H1 (cell line): ENCODE measurements at regions of chr1 and their contacts with region 1.

Region 1: GRCh38 chr1:31789259-31790065 is 25.3 kb upstream of the ADGRB2 start:
- DNase-seq: peak; percentile 60 to 100
- H3K4me3 ChIP-seq: peak overlapping the region; percentile 79 to 89 (median 88); a peak in 6 of 8 replicates
- H3K27ac ChIP-seq: no peak overlapping the region
- H3K4me1 ChIP-seq: peaks cover 3 to 8% (median 4%) of the 10 kb centered on the region in 4 experiments; a peak in 5 of 7 replicates
- H3K27me3 ChIP-seq: no peaks in the 10 kb centered on the region
- CTCF ChIP-seq: peak; percentile 95 to 98 (median 97)
- EP300 ChIP-seq: peak in 1 of 2 experiments; percentile 42; a peak in 1 of 3 replicates
- POLR2A ChIP-seq: no peak
- RAD21 ChIP-seq: peak; percentile 97 to 100

Region 2: GRCh38 chr1:31663622-31664452 is 125.6 kb before region 1 on chr1:
- CTCF ChIA-PET with region 1: interaction called, 80 read pairs
- POLR2A ChIA-PET with region 1: no interaction called
- DNase-seq: peak; percentile 25 to 98
- H3K4me3 ChIP-seq: no peak overlapping the region
- H3K27ac ChIP-seq: no peak overlapping the region
- H3K4me1 ChIP-seq: peaks cover 0 to 3% (median 0%) of the 10 kb centered on the region in 4 experiments; a peak in 3 of 7 replicates
- H3K27me3 ChIP-seq: no peaks in the 10 kb centered on the region
- CTCF ChIP-seq: peak in 2 of 3 experiments; percentile 93 to 96; a peak in 3 of 4 replicates
- EP300 ChIP-seq: no peak
- POLR2A ChIP-seq: no peak
- RAD21 ChIP-seq: peak; percentile 96 to 98

Region 3: GRCh38 chr1:31705080-31705866 is 84.2 kb before region 1 on chr1:
- CTCF ChIA-PET with region 1: interaction called, 27 read pairs
- POLR2A ChIA-PET with region 1: interaction called, 4 read pairs
- DNase-seq: peak in 1 of 2 experiments; percentile 80
- H3K4me3 ChIP-seq: peak overlapping the region in 3 of 4 experiments; percentile 15 to 69 (median 17); a peak in 5 of 8 replicates
- H3K27ac ChIP-seq: no peak overlapping the region; the same call in 1 of the 2 replicates
- H3K4me1 ChIP-seq: peaks cover 15 to 35% (median 16%) of the 10 kb centered on the region in 4 experiments
- H3K27me3 ChIP-seq: no peaks in the 10 kb centered on the region; a peak in 1 of 7 replicates
- CTCF ChIP-seq: peak in 2 of 3 experiments; percentile 6 to 24; a peak in 2 of 4 replicates
- EP300 ChIP-seq: no peak
- POLR2A ChIP-seq: no peak
- RAD21 ChIP-seq: peak; percentile 32 to 47; a peak in 3 of 4 replicates

Region 4: DNA sequence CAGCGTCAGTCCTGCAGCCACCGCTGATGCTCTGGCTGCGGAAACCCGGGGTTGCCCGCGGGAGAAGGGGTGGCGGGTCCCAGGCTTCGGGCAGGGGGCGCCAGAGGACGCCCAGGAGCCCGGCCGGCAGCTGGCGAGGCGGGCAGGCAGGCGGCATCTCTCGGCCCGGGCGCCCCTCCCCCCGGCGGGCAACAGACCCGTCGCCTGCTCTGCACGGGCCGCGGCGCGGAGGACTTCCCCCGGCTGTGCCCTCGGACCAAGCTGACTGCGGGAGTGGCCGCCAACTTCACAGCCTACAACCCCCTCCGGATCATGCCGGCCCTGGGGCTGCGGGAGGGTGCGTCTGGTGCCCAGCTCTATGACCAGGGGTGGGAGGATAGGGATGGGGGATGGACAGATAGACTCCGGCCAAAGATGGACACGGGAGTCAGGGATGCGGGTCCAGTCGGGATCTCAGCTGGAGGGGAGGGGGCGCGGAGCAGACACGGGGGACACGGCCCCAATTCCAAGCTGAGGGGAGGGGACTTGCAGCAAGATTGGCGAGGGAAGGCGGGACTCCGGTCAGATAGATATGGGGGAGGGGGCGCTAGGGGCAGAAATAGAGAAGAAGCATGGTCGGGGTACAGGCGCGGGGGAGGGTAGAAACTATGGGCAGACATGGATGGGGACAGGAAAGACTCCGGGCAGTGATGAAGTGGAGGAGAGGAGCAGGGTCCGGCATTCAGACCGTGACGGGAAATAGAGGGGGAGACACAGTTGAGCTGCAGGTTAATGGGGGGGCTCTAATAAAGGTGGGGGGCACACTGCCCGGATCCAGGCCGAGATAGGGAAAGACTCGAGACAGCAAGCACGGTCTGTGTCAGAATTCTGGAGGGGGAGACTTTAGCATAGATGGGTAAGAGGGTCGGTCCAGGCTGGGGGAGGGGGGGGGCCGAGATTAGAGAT is 26.5 kb before region 1 on chr1:
- CTCF ChIA-PET with region 1: interaction called, 206 read pairs
- POLR2A ChIA-PET with region 1: interaction called, 13 read pairs
- DNase-seq: peak in 1 of 2 experiments; percentile 94
- H3K4me3 ChIP-seq: peak overlapping the region; percentile 48 to 75 (median 62)
- H3K27ac ChIP-seq: no peak overlapping the region
- H3K4me1 ChIP-seq: peaks cover 24 to 55% (median 34%) of the 10 kb centered on the region in 4 experiments
- H3K27me3 ChIP-seq: peaks cover 3 to 16% (median 7%) of the 10 kb centered on the region in 4 experiments; a peak in 5 of 7 replicates
- CTCF ChIP-seq: peak in 2 of 3 experiments; percentile 72 to 90; a peak in 3 of 4 replicates
- EP300 ChIP-seq: peak in 1 of 2 experiments; percentile 77; a peak in 1 of 3 replicates
- POLR2A ChIP-seq: no peak
- RAD21 ChIP-seq: peak; percentile 55 to 81

Region 5: GRCh38 chr1:31805318-31805717 is 15.9 kb after region 1 on chr1:
- CTCF ChIA-PET with region 1: interaction called, 44 read pairs
- POLR2A ChIA-PET with region 1: no interaction called
- DNase-seq: no peak
- H3K4me3 ChIP-seq: no peak overlapping the region
- H3K27ac ChIP-seq: no peak overlapping the region
- H3K4me1 ChIP-seq: 0 out of 7 replicates have a peak, but pooled peaks cover 0 to 2% (median 0%) of the 10 kb centered on the region in 4 experiments
- H3K27me3 ChIP-seq: no peaks in the 10 kb centered on the region
- CTCF ChIP-seq: no peak
- EP300 ChIP-seq: no peak
- POLR2A ChIP-seq: no peak
- RAD21 ChIP-seq: no peak

Region 6: GRCh38 chr1:31910933-31911332 is 121.5 kb after region 1 on chr1:
- CTCF ChIA-PET with region 1: no interaction called
- POLR2A ChIA-PET with region 1: no interaction called
- DNase-seq: no peak
- H3K4me3 ChIP-seq: no peak overlapping the region
- H3K27ac ChIP-seq: no peak overlapping the region
- H3K4me1 ChIP-seq: no peaks in the 10 kb centered on the region
- H3K27me3 ChIP-seq: no peaks in the 10 kb centered on the region
- CTCF ChIP-seq: no peak
- EP300 ChIP-seq: no peak
- POLR2A ChIP-seq: no peak
- RAD21 ChIP-seq: no peak

Region 7: DNA sequence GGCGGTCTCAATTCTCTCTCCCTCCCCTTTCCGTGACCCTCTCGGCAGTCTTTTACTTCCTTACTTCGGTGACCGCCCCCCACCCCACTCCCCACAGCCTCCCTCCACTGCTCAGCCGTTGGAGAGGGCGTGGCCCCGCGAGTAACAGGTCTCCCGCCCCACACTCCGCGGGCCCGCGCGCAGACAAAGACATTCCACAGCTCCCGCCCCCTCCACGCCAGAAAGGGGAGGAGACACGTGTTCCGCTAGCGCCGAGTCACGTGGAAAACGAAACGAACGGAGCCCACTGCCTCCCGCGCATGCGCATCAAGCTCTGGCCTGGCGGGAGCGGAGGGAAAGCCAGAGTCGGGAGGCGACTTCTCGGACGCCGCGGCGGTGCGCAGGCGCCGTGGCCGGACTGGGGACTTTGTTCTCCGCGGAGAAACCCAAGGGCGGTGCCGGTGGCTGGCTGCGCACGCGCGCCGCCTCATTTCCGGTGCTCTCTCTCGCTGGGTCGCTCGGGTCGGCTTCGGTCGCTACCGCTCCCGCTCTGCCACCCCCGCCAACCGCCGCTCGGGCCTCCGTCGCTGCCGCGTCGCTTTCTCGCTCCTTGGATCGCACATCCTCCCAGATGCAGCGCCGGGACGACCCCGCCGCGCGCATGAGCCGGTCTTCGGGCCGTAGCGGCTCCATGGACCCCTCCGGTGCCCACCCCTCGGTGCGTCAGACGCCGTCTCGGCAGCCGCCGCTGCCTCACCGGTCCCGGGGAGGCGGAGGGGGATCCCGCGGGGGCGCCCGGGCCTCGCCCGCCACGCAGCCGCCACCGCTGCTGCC is 224.1 kb after region 1 on chr1 and contains the start of gene KHDRBS1:
- CTCF ChIA-PET with region 1: no interaction called
- POLR2A ChIA-PET with region 1: no interaction called
- DNase-seq: peak; percentile 93 to 96
- H3K4me3 ChIP-seq: peak within 1 kb of the TSS; percentile 65 to 98 (median 95)
- H3K27ac ChIP-seq: peak within 1 kb of the TSS; percentile 91
- H3K4me1 ChIP-seq: peaks cover 0 to 9% (median 7%) of the 10 kb centered on the region in 4 experiments; a peak in 5 of 7 replicates
- H3K27me3 ChIP-seq: no peaks in the 10 kb centered on the region
- CTCF ChIP-seq: no peak
- EP300 ChIP-seq: no peak
- POLR2A ChIP-seq: peak; percentile 9 to 80
- RAD21 ChIP-seq: no peak
- total RNA-seq, gene KHDRBS1: 281 and 284 TPM in 2 replicates

Region 8: GRCh38 chr1:32221980-32222755 is 432.7 kb after region 1 on chr1 and contains the starts of genes EIF3I and TMEM234:
- CTCF ChIA-PET with region 1: no interaction called
- POLR2A ChIA-PET with region 1: no interaction called
- DNase-seq: peak in 1 of 2 experiments; percentile 92
- H3K4me3 ChIP-seq: peak within 1 kb of the TSS; percentile 66 to 97 (median 88)
- H3K27ac ChIP-seq: peak within 1 kb of the TSS; percentile 83
- H3K4me1 ChIP-seq: peaks cover 0 to 7% (median 2%) of the 10 kb centered on the region in 4 experiments; a peak in 3 of 7 replicates
- H3K27me3 ChIP-seq: no peaks in the 10 kb centered on the region
- CTCF ChIP-seq: no peak
- EP300 ChIP-seq: no peak
- POLR2A ChIP-seq: peak in 1 of 2 experiments; percentile 77; a peak in 1 of 3 replicates
- RAD21 ChIP-seq: no peak
- total RNA-seq, gene EIF3I: 243 and 247 TPM in 2 replicates
- total RNA-seq, gene TMEM234: 8.9 TPM in 2 replicates